ENCODE measurements at regions of chr7 and their contacts with region 1.

Region 1: DNA sequence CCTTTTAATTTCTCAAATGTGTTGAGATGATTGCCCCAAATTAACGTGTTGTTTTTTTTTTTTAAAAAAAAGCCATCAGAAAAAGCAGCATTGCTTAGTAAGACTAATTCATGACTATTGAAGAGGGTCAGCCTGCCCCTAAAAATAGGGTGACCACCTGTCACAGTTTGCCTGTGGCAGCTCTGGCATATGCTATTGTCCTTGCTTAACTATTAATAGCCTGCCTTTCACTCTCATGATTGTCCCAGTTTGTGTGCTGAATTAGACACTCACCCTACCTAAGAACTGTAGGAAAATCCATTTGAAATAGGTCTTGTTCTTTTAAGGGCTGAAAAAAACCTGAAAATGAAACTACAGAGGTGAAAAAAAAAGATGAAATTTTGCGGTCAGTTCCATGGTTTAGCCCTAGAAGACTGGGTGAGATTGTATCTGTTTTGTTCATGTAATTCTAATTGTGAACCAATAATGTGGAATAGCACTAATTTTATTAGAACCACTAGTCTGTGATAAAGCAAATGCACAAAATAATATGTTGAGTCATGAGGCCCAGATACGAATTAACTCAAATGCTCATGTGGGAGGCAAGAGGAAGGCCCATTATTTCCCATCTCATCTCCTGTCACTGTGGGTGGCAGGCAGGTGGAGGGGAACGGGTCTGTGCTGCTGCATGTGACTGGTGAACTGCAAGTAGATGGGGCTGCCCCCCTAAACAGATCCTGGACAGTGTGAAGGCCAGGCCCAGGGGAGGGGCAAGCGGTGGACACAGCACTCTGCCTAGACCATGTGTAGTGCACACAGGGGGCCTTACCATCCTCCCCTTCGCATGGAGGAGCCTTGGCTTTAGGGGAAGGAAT is 265.4 kb upstream of the NFE2L3 start:
- DNase-seq: no peak
- ATAC-seq: no peak
- H3K4me3 ChIP-seq: no peak overlapping the region
- H3K27ac ChIP-seq: no peak overlapping the region
- H3K4me1 ChIP-seq: no peaks in the 10 kb centered on the region
- H3K27me3 ChIP-seq: no peaks in the 10 kb centered on the region
- CTCF ChIP-seq: no peak
- POLR2A ChIP-seq: no peak

Region 2: DNA sequence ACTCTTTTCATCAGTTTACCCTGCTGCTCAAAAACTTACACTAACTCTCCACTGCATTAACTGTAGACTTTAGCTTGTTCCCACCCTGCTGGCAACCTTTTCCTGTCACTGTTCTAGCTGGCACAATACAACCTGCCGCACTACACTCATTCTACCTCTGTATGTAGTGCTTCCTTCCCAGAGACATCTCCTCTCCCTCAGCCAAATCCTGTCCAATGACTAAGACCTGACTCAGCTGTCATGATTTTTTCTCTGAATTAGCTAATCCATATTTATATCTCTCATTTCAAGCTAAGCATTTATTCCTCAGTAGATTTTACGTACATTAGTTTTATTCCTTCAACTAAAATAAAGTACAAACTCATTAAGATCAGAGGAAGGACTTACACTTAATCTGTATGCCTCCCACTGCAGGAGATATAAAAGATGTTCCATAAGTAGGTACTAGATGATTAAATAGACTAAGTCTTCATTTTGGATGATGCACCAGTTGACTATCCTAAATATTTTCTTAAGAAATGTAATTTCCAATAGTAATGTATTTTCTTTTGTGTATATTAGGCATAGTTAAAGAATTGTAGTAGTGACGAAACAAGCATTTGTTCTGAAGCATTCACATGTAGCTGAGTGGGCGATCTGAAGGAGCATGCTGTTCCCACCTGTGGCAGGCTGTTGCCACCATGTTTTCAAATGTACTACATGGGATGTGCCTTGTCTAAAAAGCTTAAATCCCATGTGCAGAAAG is 788.7 kb after region 1 on chr7:
- intact Hi-C with region 1: loop called (anchors 10 kb)
- DNase-seq: no peak
- ATAC-seq: no peak
- H3K4me3 ChIP-seq: no peak overlapping the region
- H3K27ac ChIP-seq: no peak overlapping the region
- H3K4me1 ChIP-seq: no peaks in the 10 kb centered on the region
- H3K27me3 ChIP-seq: no peaks in the 10 kb centered on the region
- CTCF ChIP-seq: no peak
- POLR2A ChIP-seq: no peak

Measured in body of pancreas (tissue), 4 donors.